Aorta (tissue), 5 donors: ENCODE measurements at regions of chr11 and their contacts with region 1.

Region 1: GRCh38 chr11:64225612-64226506 is at the starts of genes NUDT22 and TRPT1:
- DNase-seq: peak; percentile 95 to 97
- ATAC-seq: peak; percentile 90
- H3K4me3 ChIP-seq: peak within 1 kb of the TSS; percentile 48 to 60
- H3K27ac ChIP-seq: peak within 1 kb of the TSS in 1 of 2 donors; percentile 75
- H3K4me1 ChIP-seq: no peaks in the 10 kb centered on the region
- H3K27me3 ChIP-seq: no peaks in the 10 kb centered on the region
- total RNA-seq, gene NUDT22: 36.7 to 46.9 TPM
- total RNA-seq, gene TRPT1: 24.5 to 24.8 TPM

Region 2: DNA sequence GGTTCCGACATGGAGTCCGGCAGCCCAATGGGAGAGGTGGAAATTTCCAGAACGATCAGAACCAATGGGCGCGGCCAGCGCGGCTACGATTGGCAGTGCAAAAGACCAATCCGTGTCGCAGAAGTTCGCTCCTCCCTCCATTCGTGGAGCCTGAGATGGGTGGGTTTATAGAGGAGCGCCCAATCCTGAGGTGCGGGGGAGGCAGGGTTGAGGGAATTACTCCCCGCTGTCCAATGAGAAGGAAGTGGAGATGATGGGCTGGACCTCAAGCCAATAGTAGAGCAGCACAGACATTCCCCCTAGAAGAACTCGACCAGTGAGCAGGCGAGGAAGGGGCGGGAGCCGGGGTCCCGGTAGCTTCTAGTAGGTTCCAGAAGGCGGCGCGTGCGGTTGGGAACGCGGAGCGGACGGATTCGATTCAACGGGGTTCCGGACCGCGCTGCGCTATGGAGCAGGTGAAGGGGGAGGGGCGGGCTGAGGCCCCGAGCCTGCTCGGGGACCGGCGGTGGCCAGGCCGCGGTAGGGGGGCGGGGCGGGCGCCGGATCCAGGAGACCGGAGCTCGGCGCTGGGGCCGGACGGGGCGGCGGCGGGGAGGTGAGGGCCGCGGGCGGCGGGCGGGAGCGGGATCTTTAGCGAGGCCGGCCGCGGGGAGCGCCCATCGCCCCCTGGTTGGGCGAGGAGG is 39.9 kb before region 1 on chr11 and contains the start of gene STIP1:
- intact Hi-C with region 1: loop called in 1 of 2 experiments (anchors 5 kb)
- DNase-seq: peak; percentile 99
- ATAC-seq: peak; percentile 96
- H3K4me3 ChIP-seq: peak within 1 kb of the TSS; percentile 22 to 52
- H3K27ac ChIP-seq: peak within 1 kb of the TSS; percentile 47 to 80
- H3K4me1 ChIP-seq: no peaks in the 10 kb centered on the region
- H3K27me3 ChIP-seq: no peaks in the 10 kb centered on the region
- total RNA-seq, gene STIP1: 67.9 to 111 TPM